ENCODE measurements at regions of chr5 and their contacts with region 1.

Region 1: DNA sequence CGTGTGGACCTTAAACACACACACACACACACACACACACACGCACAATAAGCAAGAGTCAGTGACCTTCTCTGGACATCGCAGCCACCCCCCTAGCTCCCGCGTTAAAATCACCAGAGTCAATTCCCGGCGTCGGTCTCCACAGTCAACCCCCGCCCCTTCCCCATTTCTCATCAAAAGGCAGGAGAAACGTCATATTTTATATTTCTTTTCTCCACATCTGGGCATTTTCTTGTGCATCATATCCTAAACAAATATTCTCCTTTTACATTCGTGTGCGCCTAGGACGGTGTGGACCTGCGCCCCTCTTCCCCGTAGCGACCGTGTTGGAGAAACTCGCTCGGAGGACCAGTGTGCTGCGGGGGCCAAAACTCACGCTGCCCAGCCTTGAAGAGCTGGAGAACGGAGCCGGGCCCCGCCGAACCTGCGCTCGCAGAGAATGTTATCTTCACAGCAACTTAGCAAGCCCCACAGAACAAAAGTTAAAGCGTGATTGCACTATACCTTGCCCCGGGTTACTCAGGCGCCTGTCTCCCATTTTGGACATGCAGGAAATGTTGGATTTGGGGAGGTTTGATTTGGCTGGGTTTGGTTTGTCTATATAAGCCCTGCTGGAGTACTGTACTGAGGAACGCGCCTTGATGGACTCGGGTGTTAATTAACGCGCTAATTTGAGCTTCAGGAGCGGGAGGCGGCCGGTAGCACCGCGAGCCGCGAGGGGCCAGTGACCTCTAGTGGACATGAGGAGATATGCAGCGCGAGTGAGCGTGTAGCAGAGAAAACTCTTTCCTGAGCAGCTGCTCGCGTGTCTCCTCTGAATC is 192.4 kb downstream of the MEF2C start:
- DNase-seq: peak; percentile 39

Region 2: GRCh38 chr5:88140856-88141752 is 549.5 kb before region 1 on chr5:
- in situ Hi-C with region 1: loop called (anchors 25 kb)
- DNase-seq: peak; percentile 97

Region 3: DNA sequence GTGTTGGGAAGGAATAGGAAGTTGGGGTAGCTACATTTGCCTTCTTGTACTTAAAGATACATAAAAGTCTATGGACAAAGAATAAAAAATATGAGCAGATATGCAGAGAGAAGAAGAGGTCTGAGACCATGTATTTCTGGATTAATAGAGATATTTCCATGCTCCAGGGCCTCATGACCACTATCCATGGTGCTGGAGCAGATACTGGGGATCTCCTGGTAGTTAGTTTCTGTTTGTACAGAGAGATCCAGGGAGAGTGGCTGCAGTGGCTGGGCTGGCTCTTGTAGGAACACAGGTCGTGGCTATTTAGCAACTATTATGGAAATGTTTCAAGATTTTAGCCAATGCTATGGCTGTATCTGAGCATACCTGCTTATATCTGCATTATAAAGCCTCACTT is 237.8 kb before region 1 on chr5:
- in situ Hi-C with region 1: no loop called
- DNase-seq: no peak

Measured in Caki2 (cell line).